ENCODE measurements at regions of chr17 and their contacts with region 1.

Region 1: DNA sequence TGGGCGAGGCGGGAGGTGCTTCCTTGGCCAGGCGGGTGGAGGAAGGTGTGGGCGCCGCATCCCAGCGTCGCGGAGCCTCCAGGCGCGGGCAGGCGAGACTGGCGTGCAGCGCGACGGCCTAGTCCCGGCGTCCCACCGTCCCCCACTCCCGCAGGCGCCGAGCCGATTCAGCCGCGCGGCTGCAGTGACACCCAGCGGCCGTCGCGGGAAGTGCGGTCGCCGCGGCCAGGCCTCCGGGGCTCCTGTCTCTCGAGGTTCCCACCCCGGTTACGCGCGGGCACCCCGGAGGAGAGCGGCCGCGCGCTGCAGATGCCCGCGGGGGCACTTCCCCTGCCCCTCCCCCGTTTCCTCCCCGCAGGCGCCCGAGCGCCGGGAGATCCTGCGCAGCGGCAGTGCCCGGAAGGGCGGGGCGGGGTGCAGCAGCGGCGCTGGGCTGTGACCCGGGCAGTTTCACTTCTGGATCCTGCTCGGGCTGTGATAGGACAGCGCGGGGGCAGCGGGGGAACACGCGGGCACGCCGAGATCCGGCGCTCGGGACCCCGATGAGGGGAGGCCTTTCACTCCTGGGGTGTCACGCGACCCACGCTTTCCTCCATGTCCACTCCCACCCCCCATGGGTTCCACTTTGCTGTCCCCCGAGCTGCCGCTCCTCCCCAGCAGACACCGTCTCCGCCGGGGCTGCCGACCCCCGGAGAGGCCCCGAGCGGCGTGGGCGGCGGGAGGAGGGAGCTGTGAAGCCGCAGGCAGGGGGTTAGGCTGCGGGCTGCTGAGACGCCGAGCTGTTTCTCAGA is 16.6 kb downstream of the GRB7 start:
- DNase-seq: peak; percentile 99
- ATAC-seq: peak; percentile 67
- H3K4me3 ChIP-seq: peak overlapping the region in 4 of 5 experiments; percentile 46 to 63 (median 56)
- H3K4me3 Mint-ChIP-seq: peak overlapping the region; percentile 86
- H3K27ac ChIP-seq: peak overlapping the region; percentile 100
- H3K27ac Mint-ChIP-seq: peak overlapping the region; percentile 97
- H3K4me1 ChIP-seq: peaks cover 57 to 60% of the 10 kb centered on the region in 2 donors
- H3K4me1 Mint-ChIP-seq: peaks cover 63% of the 10 kb centered on the region
- H3K27me3 ChIP-seq: no peaks in the 10 kb centered on the region
- H3K27me3 Mint-ChIP-seq: no peaks in the 10 kb centered on the region
- CTCF ChIP-seq: peak; percentile 93

Region 2: GRCh38 chr17:39547713-39548478 is 206.5 kb before region 1 on chr17:
- CTCF ChIA-PET with region 1: interaction called, 4 read pairs
- POLR2A ChIA-PET with region 1: interaction called, 5 read pairs
- intact Hi-C with region 1: loop called (anchors 1 kb)
- DNase-seq: peak; percentile 83
- ATAC-seq: peak; percentile 66
- H3K4me3 ChIP-seq: no peak overlapping the region
- H3K4me3 Mint-ChIP-seq: no peak overlapping the region
- H3K27ac ChIP-seq: no peak overlapping the region
- H3K27ac Mint-ChIP-seq: no peak overlapping the region
- H3K4me1 ChIP-seq: peaks cover 28 to 39% of the 10 kb centered on the region in 2 donors
- H3K4me1 Mint-ChIP-seq: peaks cover 38% of the 10 kb centered on the region
- H3K27me3 ChIP-seq: no peaks in the 10 kb centered on the region
- H3K27me3 Mint-ChIP-seq: no peaks in the 10 kb centered on the region
- CTCF ChIP-seq: peak; percentile 96

Region 3: DNA sequence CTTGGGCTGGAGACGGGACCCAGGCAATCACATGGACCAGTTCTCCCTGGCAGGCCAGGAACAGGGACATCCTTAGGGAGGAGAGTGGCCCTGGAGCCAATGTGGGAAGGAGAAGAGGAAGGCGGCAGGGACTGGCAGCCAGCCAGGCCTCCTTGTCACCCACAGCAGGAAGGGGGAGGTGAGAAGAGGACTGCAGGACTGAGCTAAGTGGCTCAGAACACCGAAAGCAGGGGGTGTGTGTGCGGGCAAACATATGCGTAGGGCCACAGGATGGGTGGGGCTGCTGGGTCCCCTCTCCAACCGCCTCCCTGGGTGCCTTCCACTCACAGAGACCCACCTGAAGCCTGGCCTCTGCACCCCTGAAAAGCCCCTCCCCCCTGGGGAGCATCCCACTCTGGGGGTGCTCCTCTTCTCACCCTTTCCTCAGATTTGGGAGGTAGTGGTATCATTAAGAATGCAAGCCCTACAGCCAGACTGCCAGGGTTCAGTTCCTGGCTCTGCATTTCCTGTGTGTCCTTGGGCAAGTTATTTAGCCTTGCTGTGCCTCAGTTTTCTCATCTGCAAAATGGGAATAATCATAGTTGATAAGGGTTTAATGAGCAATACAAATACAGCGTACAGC is 78.0 kb before region 1 on chr17:
- CTCF ChIA-PET with region 1: interaction called, 3 read pairs
- POLR2A ChIA-PET with region 1: interaction called, 17 read pairs
- intact Hi-C with region 1: loop called (anchors 5 kb)
- DNase-seq: peak; percentile 69
- ATAC-seq: peak; percentile 61
- H3K4me3 ChIP-seq: no peak overlapping the region
- H3K4me3 Mint-ChIP-seq: peak overlapping the region; percentile 68
- H3K27ac ChIP-seq: peak overlapping the region; percentile 65 to 94
- H3K27ac Mint-ChIP-seq: peak overlapping the region; percentile 98
- H3K4me1 ChIP-seq: peaks cover 79 to 96% of the 10 kb centered on the region in 2 donors
- H3K4me1 Mint-ChIP-seq: peaks cover 85% of the 10 kb centered on the region
- H3K27me3 ChIP-seq: peaks cover 0 to 3% (median 0%) of the 10 kb centered on the region in 4 experiments
- H3K27me3 Mint-ChIP-seq: no peaks in the 10 kb centered on the region
- CTCF ChIP-seq: no peak

Region 4: GRCh38 chr17:39704821-39705551 is 49.4 kb before region 1 on chr17:
- CTCF ChIA-PET with region 1: no interaction called
- POLR2A ChIA-PET with region 1: no interaction called
- intact Hi-C with region 1: no loop called
- DNase-seq: no peak
- ATAC-seq: no peak
- H3K4me3 ChIP-seq: no peak overlapping the region
- H3K4me3 Mint-ChIP-seq: no peak overlapping the region
- H3K27ac ChIP-seq: no peak overlapping the region
- H3K27ac Mint-ChIP-seq: no peak overlapping the region
- H3K4me1 ChIP-seq: peaks cover 23 to 25% of the 10 kb centered on the region in 2 donors
- H3K4me1 Mint-ChIP-seq: peaks cover 16% of the 10 kb centered on the region
- H3K27me3 ChIP-seq: peaks cover 0 to 20% (median 10%) of the 10 kb centered on the region in 4 experiments
- H3K27me3 Mint-ChIP-seq: peaks cover 18% of the 10 kb centered on the region
- CTCF ChIP-seq: no peak

Region 5: DNA sequence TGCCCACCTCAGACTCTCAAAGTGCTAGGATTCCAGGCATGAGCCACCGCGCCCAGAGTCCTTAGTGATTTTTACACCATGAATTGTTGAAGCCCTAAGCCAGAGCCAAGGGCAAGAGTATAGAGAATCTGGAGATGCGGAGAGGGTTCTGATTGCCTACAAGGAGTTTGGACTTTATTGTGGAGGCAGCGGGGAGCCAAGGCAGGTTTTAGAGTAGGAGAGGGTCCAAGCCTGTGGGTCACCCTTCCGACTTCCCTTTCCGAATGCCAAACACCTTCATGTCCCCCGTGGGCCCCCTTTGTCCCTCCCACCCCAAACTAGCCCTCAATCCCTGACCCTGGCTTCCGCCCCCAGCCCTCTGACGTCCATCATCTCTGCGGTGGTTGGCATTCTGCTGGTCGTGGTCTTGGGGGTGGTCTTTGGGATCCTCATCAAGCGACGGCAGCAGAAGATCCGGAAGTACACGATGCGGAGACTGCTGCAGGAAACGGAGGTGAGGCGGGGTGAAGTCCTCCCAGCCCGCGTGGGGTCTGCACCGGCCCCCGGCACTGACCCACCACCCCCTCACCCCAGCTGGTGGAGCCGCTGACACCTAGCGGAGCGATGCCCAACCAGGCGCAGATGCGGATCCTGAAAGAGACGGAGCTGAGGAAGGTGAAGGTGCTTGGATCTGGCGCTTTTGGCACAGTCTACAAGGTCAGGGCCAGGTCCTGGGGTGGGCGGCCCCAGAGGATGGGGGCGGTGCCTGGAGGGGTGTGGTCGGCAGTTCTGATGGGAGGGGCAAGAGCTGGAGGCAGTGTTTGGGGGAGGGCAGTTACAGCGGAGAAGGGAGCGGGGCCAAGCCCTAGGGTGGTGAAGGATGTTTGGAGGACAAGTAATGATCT is 31.1 kb before region 1 on chr17:
- CTCF ChIA-PET with region 1: no interaction called
- POLR2A ChIA-PET with region 1: no interaction called
- intact Hi-C with region 1: no loop called
- DNase-seq: no peak
- ATAC-seq: peak; percentile 43
- H3K4me3 ChIP-seq: no peak overlapping the region
- H3K4me3 Mint-ChIP-seq: no peak overlapping the region
- H3K27ac ChIP-seq: no peak overlapping the region
- H3K27ac Mint-ChIP-seq: no peak overlapping the region
- H3K4me1 ChIP-seq: no peaks in the 10 kb centered on the region
- H3K4me1 Mint-ChIP-seq: peaks cover 9% of the 10 kb centered on the region
- H3K27me3 ChIP-seq: no peaks in the 10 kb centered on the region
- H3K27me3 Mint-ChIP-seq: no peaks in the 10 kb centered on the region
- CTCF ChIP-seq: no peak

Region 6: GRCh38 chr17:39769974-39770587 is 15.7 kb after region 1 on chr17:
- CTCF ChIA-PET with region 1: interaction called, 32 read pairs
- POLR2A ChIA-PET with region 1: interaction called, 46 read pairs
- intact Hi-C with region 1: loop called (anchors 1 kb)
- DNase-seq: no peak
- ATAC-seq: peak; percentile 67
- H3K4me3 ChIP-seq: no peak overlapping the region
- H3K4me3 Mint-ChIP-seq: peak overlapping the region; percentile 79
- H3K27ac ChIP-seq: peak overlapping the region; percentile 14 to 86
- H3K27ac Mint-ChIP-seq: peak overlapping the region; percentile 98
- H3K4me1 ChIP-seq: peaks cover 84 to 90% of the 10 kb centered on the region in 2 donors
- H3K4me1 Mint-ChIP-seq: peaks cover 95% of the 10 kb centered on the region
- H3K27me3 ChIP-seq: no peaks in the 10 kb centered on the region
- H3K27me3 Mint-ChIP-seq: no peaks in the 10 kb centered on the region
- CTCF ChIP-seq: no peak

Region 7: DNA sequence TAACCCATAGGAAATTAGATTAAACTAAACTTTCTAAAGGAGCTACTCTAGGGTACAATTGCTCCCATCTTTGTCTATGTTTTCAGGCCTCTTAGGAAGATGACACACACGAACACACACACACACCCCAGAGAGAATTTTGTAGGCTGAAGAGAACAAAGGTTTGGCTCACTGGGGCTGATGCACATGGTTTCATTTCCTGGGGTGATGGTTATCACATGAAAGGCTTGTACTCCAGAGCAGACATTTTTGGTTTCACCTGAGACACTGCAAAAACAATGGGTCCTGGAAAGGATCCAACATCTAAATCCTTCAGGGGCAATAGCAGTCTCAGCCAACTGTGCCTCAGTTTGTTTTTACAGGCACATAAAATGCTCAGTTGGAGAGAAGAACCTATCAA is 46.2 kb after region 1 on chr17:
- CTCF ChIA-PET with region 1: interaction called, 25 read pairs
- POLR2A ChIA-PET with region 1: interaction called, 48 read pairs
- intact Hi-C with region 1: no loop called
- DNase-seq: peak; percentile 64
- ATAC-seq: peak; percentile 78
- H3K4me3 ChIP-seq: no peak overlapping the region
- H3K4me3 Mint-ChIP-seq: peak overlapping the region; percentile 66
- H3K27ac ChIP-seq: peak overlapping the region; percentile 44 to 86
- H3K27ac Mint-ChIP-seq: peak overlapping the region; percentile 94
- H3K4me1 ChIP-seq: peaks cover 63 to 70% of the 10 kb centered on the region in 2 donors
- H3K4me1 Mint-ChIP-seq: peaks cover 67% of the 10 kb centered on the region
- H3K27me3 ChIP-seq: no peaks in the 10 kb centered on the region
- H3K27me3 Mint-ChIP-seq: no peaks in the 10 kb centered on the region
- CTCF ChIP-seq: no peak

Region 8: DNA sequence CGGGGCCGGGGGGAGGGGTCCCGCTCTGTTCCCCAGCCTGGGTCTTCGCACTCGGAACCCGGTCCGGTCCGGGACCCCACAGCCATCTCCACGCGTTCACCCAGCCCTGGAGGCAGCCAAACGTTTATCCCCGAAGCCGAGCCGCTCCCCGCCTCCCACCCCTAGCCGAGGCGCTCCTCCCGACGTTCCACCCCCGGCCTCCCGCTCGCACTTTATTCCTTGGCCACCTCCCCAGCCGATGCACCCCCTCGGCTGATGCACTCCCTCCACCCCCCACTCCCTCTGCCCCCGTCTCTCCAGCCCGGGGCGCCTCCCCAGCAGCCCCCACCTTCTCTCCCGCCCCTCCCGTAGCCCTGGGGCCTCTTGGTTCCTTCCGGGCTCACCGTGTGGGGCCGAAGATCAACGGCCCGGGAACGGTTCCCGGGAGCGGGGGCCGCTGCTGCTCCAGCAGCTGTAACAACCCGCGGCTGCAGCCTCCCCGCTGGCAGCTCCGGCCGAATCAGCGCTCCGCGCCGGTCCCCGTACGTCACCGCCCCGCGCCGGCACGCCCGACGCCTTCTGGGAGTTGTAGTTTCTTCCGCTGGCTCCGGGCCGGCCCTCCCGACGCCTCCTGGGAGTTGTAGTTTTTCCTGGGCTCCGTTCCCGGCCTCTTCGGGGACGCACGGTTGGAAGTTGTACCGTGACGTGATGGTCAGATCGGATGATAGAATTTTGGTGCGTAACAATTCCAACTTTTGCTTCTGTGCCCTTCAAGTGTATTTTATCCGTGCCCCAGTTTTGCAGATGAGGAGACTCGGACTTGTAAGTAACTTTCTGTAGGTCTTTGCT is 173.0 kb after region 1 on chr17 and contains the starts of genes LRRC3C and ORMDL3:
- CTCF ChIA-PET with region 1: no interaction called
- POLR2A ChIA-PET with region 1: no interaction called
- intact Hi-C with region 1: loop called (anchors 10 kb)
- DNase-seq: peak; percentile 93
- ATAC-seq: peak; percentile 96
- H3K4me3 ChIP-seq: peak within 1 kb of the TSS; percentile 66 to 93 (median 79)
- H3K4me3 Mint-ChIP-seq: peak within 1 kb of the TSS; percentile 92
- H3K27ac ChIP-seq: peak within 1 kb of the TSS; percentile 46 to 73
- H3K27ac Mint-ChIP-seq: peak within 1 kb of the TSS; percentile 87
- H3K4me1 ChIP-seq: peaks cover 33 to 34% of the 10 kb centered on the region in 2 donors
- H3K4me1 Mint-ChIP-seq: peaks cover 36% of the 10 kb centered on the region
- H3K27me3 ChIP-seq: no peaks in the 10 kb centered on the region
- H3K27me3 Mint-ChIP-seq: no peaks in the 10 kb centered on the region
- CTCF ChIP-seq: no peak
- total RNA-seq, gene LRRC3C: not detected in 2 replicates
- total RNA-seq, gene ORMDL3: 43.4 and 51.8 TPM in 2 replicates

Region 9: GRCh38 chr17:39980351-39981206 is 226.2 kb after region 1 on chr17 and contains the start of gene PSMD3:
- CTCF ChIA-PET with region 1: interaction called, 4 read pairs
- POLR2A ChIA-PET with region 1: interaction called, 11 read pairs
- intact Hi-C with region 1: loop called (anchors 1 kb)
- DNase-seq: peak; percentile 100
- ATAC-seq: peak; percentile 92
- H3K4me3 ChIP-seq: peak within 1 kb of the TSS; percentile 76 to 93 (median 91)
- H3K4me3 Mint-ChIP-seq: peak within 1 kb of the TSS; percentile 96
- H3K27ac ChIP-seq: peak within 1 kb of the TSS; percentile 92 to 97
- H3K27ac Mint-ChIP-seq: peak within 1 kb of the TSS; percentile 95
- H3K4me1 ChIP-seq: peaks cover 25 to 26% of the 10 kb centered on the region in 2 donors
- H3K4me1 Mint-ChIP-seq: peaks cover 38% of the 10 kb centered on the region
- H3K27me3 ChIP-seq: no peaks in the 10 kb centered on the region
- H3K27me3 Mint-ChIP-seq: no peaks in the 10 kb centered on the region
- CTCF ChIP-seq: peak; percentile 76
- total RNA-seq, gene PSMD3: 69.4 and 76.6 TPM in 2 replicates

Measured in B cell (primary cell).